ENCODE measurements at regions of chr17 and their contacts with region 1.

Region 1: DNA sequence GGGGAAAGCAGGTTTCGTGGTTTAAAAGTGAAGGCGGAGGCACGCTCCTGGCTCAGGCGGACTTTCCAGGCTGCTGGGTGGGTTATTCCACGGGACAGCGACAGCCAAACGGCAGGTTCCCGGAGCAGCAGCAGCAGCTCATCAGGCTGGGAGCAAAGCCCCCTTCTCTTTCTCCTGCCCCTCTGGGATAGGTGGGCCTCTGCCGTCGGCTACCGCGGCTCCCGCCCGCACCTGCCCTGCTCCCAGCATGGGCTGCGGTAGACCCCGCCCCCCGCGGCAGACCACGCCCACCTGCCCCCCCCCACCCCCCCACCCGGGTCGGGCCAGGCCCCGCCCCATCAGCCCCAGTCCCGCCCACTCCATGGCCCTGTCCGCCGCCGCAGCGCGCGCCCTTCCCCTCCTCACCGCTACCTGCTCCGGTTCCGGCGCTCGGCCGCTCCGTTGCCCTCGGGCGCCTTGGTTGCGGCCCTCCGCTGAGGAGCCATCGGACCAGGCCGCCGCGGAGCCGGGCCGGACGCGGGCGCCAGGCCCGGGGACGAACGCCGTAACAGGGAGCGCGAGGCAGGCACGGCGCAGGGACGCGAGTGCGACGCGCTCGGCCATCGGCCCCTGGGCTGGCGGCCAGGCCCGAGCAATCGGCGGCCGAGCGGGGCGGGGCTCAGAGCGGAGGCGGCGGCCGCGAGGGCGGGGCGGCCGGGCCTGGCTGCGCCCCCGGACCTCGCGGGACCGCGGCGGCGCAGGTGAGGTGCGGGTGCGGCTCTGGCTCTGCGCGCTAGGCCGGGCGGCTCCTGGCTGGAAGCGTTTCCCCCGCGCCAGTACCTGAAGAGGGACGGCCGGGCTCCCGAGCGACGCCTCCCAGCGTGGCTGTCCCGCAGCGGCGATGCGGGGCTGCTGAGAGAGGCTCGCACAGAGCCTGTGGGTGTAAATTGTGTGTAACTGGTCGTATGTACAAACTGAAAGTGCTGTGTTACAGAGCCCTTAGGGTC is at the starts of genes HEXD and OGFOD3:
- DNase-seq: no peak
- ATAC-seq: peak; percentile 86
- H3K4me3 ChIP-seq: peak within 1 kb of the TSS; percentile 97
- H3K27ac ChIP-seq: peak within 1 kb of the TSS; percentile 59
- H3K4me1 ChIP-seq: 0 out of 2 replicates have a peak, but pooled peaks cover 5% of the 10 kb centered on the region
- H3K27me3 ChIP-seq: no peaks in the 10 kb centered on the region
- CTCF ChIP-seq: no peak
- EP300 ChIP-seq: no peak; a peak in 1 of 4 replicates
- POLR2A ChIP-seq: peak; percentile 94
- RAD21 ChIP-seq: no peak
- polyA plus RNA-seq, gene HEXD: 1.6 to 1.9 TPM
- polyA plus RNA-seq, gene OGFOD3: 0.48 to 2.4 TPM

Region 2: GRCh38 chr17:82230627-82231311 is 187.5 kb before region 1 on chr17:
- CTCF ChIA-PET with region 1: no interaction called
- POLR2A ChIA-PET with region 1: no interaction called
- RAD21 ChIA-PET with region 1: no interaction called
- SMC1A ChIA-PET with region 1: no interaction called
- in situ Hi-C with region 1: no loop called
- intact Hi-C with region 1: loop called (anchors 5 kb)
- DNase-seq: no peak
- ATAC-seq: peak; percentile 78
- H3K4me3 ChIP-seq: peak overlapping the region; percentile 99
- H3K27ac ChIP-seq: peak overlapping the region; percentile 73; the same call in 1 of the 2 replicates
- H3K4me1 ChIP-seq: peaks cover 37% of the 10 kb centered on the region
- H3K27me3 ChIP-seq: no peaks in the 10 kb centered on the region
- CTCF ChIP-seq: peak; percentile 18 to 50 (median 42); a peak in 5 of 6 replicates
- EP300 ChIP-seq: no peak
- POLR2A ChIP-seq: peak; percentile 39; the same call in 1 of the 2 replicates
- RAD21 ChIP-seq: no peak

Region 3: GRCh38 chr17:82450170-82451106 is 32.1 kb after region 1 on chr17 and contains the start of gene CYBC1:
- CTCF ChIA-PET with region 1: interaction called, 12 read pairs
- POLR2A ChIA-PET with region 1: interaction called, 11 read pairs
- RAD21 ChIA-PET with region 1: interaction called, 4 read pairs
- SMC1A ChIA-PET with region 1: interaction called, 8 read pairs
- in situ Hi-C with region 1: no loop called
- intact Hi-C with region 1: no loop called
- DNase-seq: peak; percentile 63
- ATAC-seq: peak; percentile 79
- H3K4me3 ChIP-seq: peak within 1 kb of the TSS; percentile 93
- H3K27ac ChIP-seq: peak within 1 kb of the TSS; percentile 97
- H3K4me1 ChIP-seq: peaks cover 4% of the 10 kb centered on the region
- H3K27me3 ChIP-seq: no peaks in the 10 kb centered on the region
- CTCF ChIP-seq: no peak
- EP300 ChIP-seq: no peak
- POLR2A ChIP-seq: peak; percentile 98
- RAD21 ChIP-seq: no peak
- polyA plus RNA-seq, gene CYBC1: 4.2 to 8.5 TPM

Region 4: GRCh38 chr17:82457997-82458864 is 39.9 kb after region 1 on chr17 and contains the start of gene NARF:
- CTCF ChIA-PET with region 1: no interaction called
- POLR2A ChIA-PET with region 1: interaction called, 10 read pairs
- RAD21 ChIA-PET with region 1: no interaction called
- SMC1A ChIA-PET with region 1: interaction called, 7 read pairs
- in situ Hi-C with region 1: no loop called
- intact Hi-C with region 1: no loop called
- DNase-seq: peak; percentile 87
- ATAC-seq: peak; percentile 99
- H3K4me3 ChIP-seq: peak within 1 kb of the TSS; percentile 92
- H3K27ac ChIP-seq: peak within 1 kb of the TSS; percentile 99
- H3K4me1 ChIP-seq: peaks cover 6% of the 10 kb centered on the region
- H3K27me3 ChIP-seq: no peaks in the 10 kb centered on the region
- CTCF ChIP-seq: no peak
- EP300 ChIP-seq: no peak
- POLR2A ChIP-seq: peak; percentile 95
- RAD21 ChIP-seq: no peak
- polyA plus RNA-seq, gene NARF: 16.7 to 27.4 TPM

Region 5: DNA sequence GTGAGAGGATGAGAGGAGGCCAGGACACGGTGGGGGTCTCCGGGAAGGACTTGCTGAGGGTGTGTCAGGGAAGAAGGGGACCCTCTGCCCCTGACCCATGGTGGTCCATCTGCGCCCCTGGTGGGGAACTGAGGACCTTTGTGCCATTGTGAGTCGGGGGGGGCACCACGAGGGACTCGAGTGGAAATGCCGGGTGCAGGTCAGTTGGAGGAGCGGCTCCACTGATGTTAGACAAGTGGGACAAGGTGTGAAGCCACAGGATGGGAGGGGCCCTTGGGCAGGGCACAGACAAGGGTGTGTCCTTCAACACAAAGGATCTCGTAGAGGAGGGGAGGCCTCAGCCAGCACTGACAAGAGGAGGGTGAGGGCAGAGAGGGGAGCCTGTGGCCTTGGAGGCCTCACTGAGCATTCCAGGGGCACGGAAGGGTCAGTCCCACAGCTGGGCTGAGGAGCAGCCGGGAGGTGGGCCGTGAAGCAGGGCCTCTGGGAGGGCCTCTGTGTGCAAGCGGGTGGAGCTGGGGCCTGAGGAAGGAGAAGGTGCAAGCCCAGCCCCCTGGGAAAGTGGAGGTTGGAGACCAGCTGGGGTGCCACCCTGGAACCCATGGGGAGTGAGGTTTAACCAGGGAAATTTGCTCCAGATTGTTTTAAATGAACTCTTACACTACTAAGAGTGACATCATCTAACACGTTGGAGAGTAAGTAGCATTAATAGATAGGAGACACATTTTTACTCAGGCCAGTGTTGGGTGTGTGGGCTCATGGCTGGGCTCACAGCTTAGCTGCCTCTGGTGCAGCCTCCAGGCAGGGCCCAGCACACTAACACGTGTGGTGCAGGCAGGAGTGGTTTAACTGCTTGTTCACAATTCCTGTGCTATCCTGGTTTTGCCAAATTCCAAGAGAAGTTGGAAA is 68.1 kb after region 1 on chr17:
- CTCF ChIA-PET with region 1: no interaction called
- POLR2A ChIA-PET with region 1: no interaction called
- RAD21 ChIA-PET with region 1: no interaction called
- SMC1A ChIA-PET with region 1: no interaction called
- in situ Hi-C with region 1: no loop called
- intact Hi-C with region 1: no loop called
- DNase-seq: no peak
- ATAC-seq: no peak
- H3K4me3 ChIP-seq: no peak overlapping the region
- H3K27ac ChIP-seq: no peak overlapping the region
- H3K4me1 ChIP-seq: no peaks in the 10 kb centered on the region; the same call in 1 of the 2 replicates
- H3K27me3 ChIP-seq: no peaks in the 10 kb centered on the region
- CTCF ChIP-seq: no peak
- EP300 ChIP-seq: no peak
- POLR2A ChIP-seq: no peak; the same call in 1 of the 2 replicates
- RAD21 ChIP-seq: no peak